ENCODE measurements at regions of chr17 and their contacts with region 1.

Region 1: GRCh38 chr17:81601525-81602120 is 35.3 kb downstream of the NPLOC4 start:
- DNase-seq: peak; percentile 56 to 67 (median 61)
- ATAC-seq: peak; percentile 98
- H3K4me3 ChIP-seq: no peak overlapping the region
- H3K27ac ChIP-seq: no peak overlapping the region
- H3K4me1 ChIP-seq: no peaks in the 10 kb centered on the region
- H3K27me3 ChIP-seq: no peaks in the 10 kb centered on the region
- CTCF ChIP-seq: peak; percentile 50 to 80 (median 77); a peak in 5 of 6 replicates
- EP300 ChIP-seq: no peak
- POLR2A ChIP-seq: no peak; the same call in 1 of the 2 replicates
- RAD21 ChIP-seq: peak in 1 of 2 experiments; percentile 46; a peak in 3 of 4 replicates

Region 2: GRCh38 chr17:81245024-81245664 is 356.5 kb before region 1 on chr17:
- CTCF ChIA-PET with region 1: no interaction called
- POLR2A ChIA-PET with region 1: no interaction called
- in situ Hi-C with region 1: no loop called
- intact Hi-C with region 1: no loop called
- DNase-seq: no peak
- ATAC-seq: no peak; the same call in 2 of the 3 replicates
- H3K4me3 ChIP-seq: no peak overlapping the region
- H3K27ac ChIP-seq: no peak overlapping the region
- H3K4me1 ChIP-seq: peaks cover 5 to 74% of the 10 kb centered on the region in 2 experiments; a peak in 4 of 5 replicates
- H3K27me3 ChIP-seq: no peaks in the 10 kb centered on the region
- CTCF ChIP-seq: no peak
- EP300 ChIP-seq: no peak
- POLR2A ChIP-seq: 0 out of 2 replicates have a peak, but pooled peaks have one; percentile 20
- RAD21 ChIP-seq: no peak

Region 3: DNA sequence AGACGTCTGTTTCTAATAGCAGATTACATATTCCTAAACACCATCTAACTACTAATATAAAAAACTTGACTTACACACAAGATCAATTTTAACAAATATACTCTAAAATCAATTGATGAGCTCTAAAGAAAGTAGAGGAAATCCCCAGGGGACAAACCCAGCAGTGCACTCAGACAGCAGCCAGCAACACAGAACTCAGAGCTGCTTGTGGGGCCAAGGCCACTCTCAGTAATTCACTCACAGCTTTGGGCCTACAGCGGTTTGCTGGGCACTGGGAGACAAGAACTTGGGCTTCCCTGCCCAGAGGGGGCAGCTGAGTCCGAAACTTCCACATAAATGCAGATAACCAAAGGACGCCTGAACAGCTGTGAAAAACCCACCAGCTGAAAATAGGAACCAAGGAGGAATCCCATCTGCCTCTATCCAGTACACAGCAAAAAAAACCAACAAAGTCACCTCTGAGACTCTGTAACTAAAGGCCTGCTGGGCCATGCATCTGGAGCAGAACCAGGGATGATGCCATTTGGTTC is 13.8 kb after region 1 on chr17:
- CTCF ChIA-PET with region 1: no interaction called
- POLR2A ChIA-PET with region 1: interaction called, 10 read pairs
- in situ Hi-C with region 1: no loop called
- intact Hi-C with region 1: no loop called
- DNase-seq: no peak
- ATAC-seq: no peak
- H3K4me3 ChIP-seq: no peak overlapping the region
- H3K27ac ChIP-seq: no peak overlapping the region
- H3K4me1 ChIP-seq: no peaks in the 10 kb centered on the region
- H3K27me3 ChIP-seq: no peaks in the 10 kb centered on the region
- CTCF ChIP-seq: no peak
- EP300 ChIP-seq: no peak
- POLR2A ChIP-seq: no peak
- RAD21 ChIP-seq: no peak